ENCODE measurements at regions of chr11 and their contacts with region 1.

Region 1: GRCh38 chr11:47908221-47908620 is 60.1 kb upstream of the NUP160 start:
- DNase-seq: no peak
- H3K4me3 Mint-ChIP-seq: no peak overlapping the region
- H3K27ac Mint-ChIP-seq: no peak overlapping the region
- H3K4me1 Mint-ChIP-seq: peaks cover 10% of the 10 kb centered on the region
- H3K27me3 Mint-ChIP-seq: no peaks in the 10 kb centered on the region

Region 2: DNA sequence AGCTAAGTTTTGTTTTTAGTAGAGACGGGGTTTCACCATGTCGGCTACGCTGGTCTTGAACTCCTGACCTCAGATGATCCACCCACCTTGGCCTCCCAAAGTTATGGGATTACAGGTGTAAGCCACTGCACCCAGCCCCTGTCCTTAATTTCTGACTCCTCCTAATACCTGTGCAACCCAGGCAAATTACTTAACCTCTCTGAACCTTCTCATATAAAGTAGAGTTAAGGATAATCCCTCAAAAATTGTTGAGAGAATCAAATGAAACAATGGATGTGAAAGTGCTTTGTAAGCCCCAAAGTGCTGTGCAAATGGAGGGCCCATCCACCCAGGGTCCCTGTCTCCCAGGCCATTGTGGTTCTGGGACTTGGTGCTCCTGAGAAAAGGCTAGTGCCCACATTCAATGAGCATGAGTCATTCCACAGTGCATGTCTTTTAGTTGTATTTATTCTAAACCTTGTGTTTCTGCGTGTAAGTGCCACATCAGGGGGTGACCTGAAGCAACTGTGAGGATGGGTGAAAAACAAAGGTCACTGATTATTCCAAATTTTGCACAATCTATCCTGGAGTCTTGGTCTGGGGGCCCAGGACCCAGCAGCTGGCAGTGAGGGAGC is 10.8 kb after region 1 on chr11:
- CTCF ChIA-PET with region 1: interaction called, 9 read pairs
- POLR2A ChIA-PET with region 1: interaction called, 10 read pairs
- DNase-seq: no peak
- H3K4me3 Mint-ChIP-seq: no peak overlapping the region
- H3K27ac Mint-ChIP-seq: no peak overlapping the region
- H3K4me1 Mint-ChIP-seq: peaks cover 63% of the 10 kb centered on the region
- H3K27me3 Mint-ChIP-seq: no peaks in the 10 kb centered on the region

Measured in activated CD4-positive, alpha-beta memory T cell treated with anti-CD3 and anti-CD28 coated beads, Interleukin-2, amount 10 ng/mL, durations not matched to agents 7 days and 5 days (primary cell).